Activated CD4-positive, alpha-beta memory T cell treated with anti-CD3 and anti-CD28 coated beads, Interleukin-2, amount 10 ng/mL, durations not matched to agents 7 days and 5 days (primary cell): ENCODE measurements at regions of chr12 and their contacts with region 1.

Region 1: GRCh38 chr12:49740930-49741881 is at the start of gene TMBIM6:
- DNase-seq: peak; percentile 99
- H3K4me3 Mint-ChIP-seq: peak within 1 kb of the TSS; percentile 96
- H3K27ac Mint-ChIP-seq: peak within 1 kb of the TSS; percentile 100
- H3K4me1 Mint-ChIP-seq: peaks cover 37% of the 10 kb centered on the region
- H3K27me3 Mint-ChIP-seq: peaks cover 1% of the 10 kb centered on the region
- total RNA-seq, gene TMBIM6: 600 to 613 TPM

Region 2: DNA sequence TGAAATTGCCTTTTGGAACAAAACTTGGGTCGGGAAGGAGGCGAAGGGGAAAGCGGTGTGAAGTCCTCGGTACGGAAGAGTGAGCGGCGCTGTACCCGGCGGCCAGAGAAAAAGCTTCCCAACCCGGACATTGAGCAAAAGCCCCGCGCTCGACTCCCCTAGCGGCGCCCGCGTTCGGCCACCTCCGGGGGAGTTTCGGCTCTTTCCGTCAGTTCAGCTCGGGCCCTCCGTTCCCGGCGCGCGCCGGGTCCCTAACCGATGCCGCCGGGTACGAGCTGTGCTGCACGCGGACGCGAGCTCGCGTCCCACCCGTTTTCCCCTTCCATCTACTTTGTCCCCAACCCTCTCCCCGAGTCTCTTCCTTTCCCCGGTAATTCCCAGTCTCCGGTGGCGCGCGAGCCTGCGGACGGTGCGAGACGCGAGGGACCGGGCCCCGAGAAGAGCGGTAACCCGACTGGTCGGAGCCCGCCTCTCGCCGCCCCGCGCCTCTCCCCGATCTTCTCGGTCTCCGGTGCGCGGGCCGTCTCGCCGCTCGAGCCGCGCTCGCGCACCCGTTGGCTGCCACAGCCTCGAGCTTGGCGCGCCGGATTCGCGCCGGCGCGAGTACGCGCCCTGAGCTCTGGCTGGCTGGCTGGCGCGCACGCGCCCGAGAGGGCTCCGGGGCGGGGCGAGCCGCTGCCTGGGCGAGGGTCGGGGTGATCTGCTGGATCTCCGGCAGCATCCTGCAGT is 374.4 kb before region 1 on chr12:
- CTCF ChIA-PET with region 1: interaction called, 8 read pairs
- POLR2A ChIA-PET with region 1: interaction called, 14 read pairs
- DNase-seq: peak; percentile 91
- H3K4me3 Mint-ChIP-seq: peak overlapping the region; percentile 96
- H3K27ac Mint-ChIP-seq: peak overlapping the region; percentile 93
- H3K4me1 Mint-ChIP-seq: peaks cover 35% of the 10 kb centered on the region
- H3K27me3 Mint-ChIP-seq: peaks cover 2% of the 10 kb centered on the region

Region 3: DNA sequence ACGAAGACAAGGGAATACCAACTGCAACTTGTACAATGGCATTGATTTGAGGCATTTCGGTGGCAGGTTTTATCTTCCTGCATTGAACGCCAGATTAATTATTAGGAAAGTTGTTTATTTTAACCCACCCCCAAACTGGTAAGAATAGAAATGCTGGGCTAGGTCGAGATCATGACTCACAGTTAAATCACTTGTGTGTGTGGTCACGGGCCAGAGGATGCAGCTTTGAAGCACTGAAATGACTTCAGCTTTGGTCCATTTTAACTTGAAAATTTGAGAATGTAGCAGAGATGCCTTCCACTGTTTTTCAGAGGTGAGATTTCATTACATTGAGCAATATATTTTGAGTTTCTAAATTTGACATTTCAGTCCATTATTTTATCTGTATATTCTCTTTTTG is 225.9 kb before region 1 on chr12:
- CTCF ChIA-PET with region 1: no interaction called
- POLR2A ChIA-PET with region 1: no interaction called
- DNase-seq: no peak
- H3K4me3 Mint-ChIP-seq: no peak overlapping the region
- H3K27ac Mint-ChIP-seq: no peak overlapping the region
- H3K4me1 Mint-ChIP-seq: peaks cover 1% of the 10 kb centered on the region
- H3K27me3 Mint-ChIP-seq: no peaks in the 10 kb centered on the region

Region 4: DNA sequence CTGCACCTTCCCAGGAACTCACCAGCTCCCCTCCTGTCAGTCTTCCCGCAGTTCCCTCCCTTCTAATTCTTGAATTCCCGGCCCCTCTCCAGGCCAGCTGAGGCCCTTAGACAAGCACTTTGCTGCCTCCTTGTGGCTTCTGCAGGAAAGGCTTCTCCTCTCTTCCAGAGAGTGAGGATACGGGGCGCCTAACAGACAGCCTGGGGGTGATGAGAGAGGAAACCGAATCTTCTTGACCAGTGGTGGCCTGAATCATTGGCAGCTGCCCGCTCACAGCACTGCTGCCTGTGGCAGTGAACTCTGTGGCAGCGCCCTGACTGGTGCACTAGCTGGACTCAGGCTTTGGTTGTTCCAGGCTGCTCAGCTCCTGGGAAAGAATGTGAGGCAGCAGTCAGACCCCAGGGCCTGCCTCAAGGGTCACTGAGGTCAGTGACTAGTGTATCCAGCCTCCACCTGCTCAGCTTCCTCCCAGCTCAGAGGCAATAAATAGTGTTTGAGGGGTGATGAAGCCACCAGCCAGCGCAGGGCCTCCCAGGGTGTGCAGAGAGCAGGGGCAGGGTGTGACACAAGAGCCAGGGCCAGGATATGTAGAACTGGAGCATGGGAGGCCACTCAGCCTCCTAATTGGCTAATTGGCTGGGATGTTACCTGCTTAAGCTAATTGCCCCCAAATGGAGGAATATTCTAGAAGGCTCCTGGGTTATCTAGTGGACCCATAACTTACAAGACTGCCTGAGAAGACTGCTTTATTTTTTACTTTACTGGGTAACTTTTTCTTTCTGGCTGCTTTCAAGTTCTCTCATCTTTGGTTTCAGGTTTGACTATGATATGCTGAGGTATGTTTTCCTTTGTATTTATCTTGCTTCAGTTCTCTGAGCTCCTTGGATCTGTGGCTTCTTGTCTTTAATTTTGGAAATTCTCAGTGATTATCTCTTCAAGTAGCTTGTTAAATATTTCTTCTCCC is 160.4 kb before region 1 on chr12:
- CTCF ChIA-PET with region 1: no interaction called
- POLR2A ChIA-PET with region 1: no interaction called
- DNase-seq: peak; percentile 65
- H3K4me3 Mint-ChIP-seq: no peak overlapping the region
- H3K27ac Mint-ChIP-seq: no peak overlapping the region
- H3K4me1 Mint-ChIP-seq: peaks cover 21% of the 10 kb centered on the region
- H3K27me3 Mint-ChIP-seq: no peaks in the 10 kb centered on the region

Region 5: DNA sequence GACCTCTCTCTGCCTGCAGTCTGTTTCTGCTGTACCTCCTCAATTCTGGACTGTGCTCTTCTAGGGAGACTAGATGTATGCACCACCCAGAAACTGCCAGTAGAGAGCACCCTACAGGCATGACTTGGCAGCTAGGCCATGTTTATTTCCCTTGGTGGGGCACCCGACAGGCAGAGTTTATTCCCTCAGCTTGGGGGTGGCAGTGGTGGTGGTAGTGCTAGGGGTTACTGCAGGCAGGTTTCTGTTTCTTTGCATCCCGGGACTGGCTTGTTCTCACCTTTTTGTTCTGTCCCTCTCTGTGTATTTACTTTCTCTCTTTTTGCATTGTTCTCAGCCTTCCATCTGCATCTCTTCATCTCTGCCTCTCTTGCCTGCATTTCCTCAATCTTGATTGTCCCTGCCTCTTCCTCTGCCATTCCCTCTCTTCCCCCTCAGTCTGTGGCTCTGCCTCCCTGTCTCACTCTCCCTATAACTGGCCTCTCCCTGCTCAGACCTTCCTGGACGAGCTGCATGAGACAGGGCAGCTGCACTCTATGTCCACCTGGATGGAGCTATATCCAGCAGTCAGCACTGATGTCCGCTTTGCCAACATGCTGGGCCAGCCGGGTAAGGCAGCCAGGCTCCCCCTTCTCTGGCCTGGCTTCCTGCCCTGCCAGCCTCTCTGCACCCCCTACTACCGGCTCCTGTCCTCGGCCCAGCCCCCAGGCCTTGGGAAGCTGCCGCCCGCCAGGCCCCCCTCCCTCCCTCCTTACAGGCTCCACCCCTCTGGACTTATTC is 104.0 kb before region 1 on chr12:
- CTCF ChIA-PET with region 1: interaction called, 11 read pairs
- POLR2A ChIA-PET with region 1: interaction called, 5 read pairs
- DNase-seq: peak; percentile 68
- H3K4me3 Mint-ChIP-seq: no peak overlapping the region
- H3K27ac Mint-ChIP-seq: no peak overlapping the region
- H3K4me1 Mint-ChIP-seq: peaks cover 16% of the 10 kb centered on the region
- H3K27me3 Mint-ChIP-seq: no peaks in the 10 kb centered on the region

Region 6: GRCh38 chr12:49673446-49674317 is 67.5 kb before region 1 on chr12:
- CTCF ChIA-PET with region 1: interaction called, 7 read pairs
- POLR2A ChIA-PET with region 1: interaction called, 23 read pairs
- DNase-seq: no peak
- H3K4me3 Mint-ChIP-seq: no peak overlapping the region
- H3K27ac Mint-ChIP-seq: peak overlapping the region; percentile 68
- H3K4me1 Mint-ChIP-seq: peaks cover 71% of the 10 kb centered on the region
- H3K27me3 Mint-ChIP-seq: no peaks in the 10 kb centered on the region

Region 7: GRCh38 chr12:49763006-49763591 is 21.9 kb after region 1 on chr12:
- CTCF ChIA-PET with region 1: interaction called, 66 read pairs
- POLR2A ChIA-PET with region 1: interaction called, 75 read pairs
- DNase-seq: peak; percentile 84
- H3K4me3 Mint-ChIP-seq: peak overlapping the region; percentile 3
- H3K27ac Mint-ChIP-seq: peak overlapping the region; percentile 92
- H3K4me1 Mint-ChIP-seq: peaks cover 51% of the 10 kb centered on the region
- H3K27me3 Mint-ChIP-seq: peaks cover 2% of the 10 kb centered on the region

Region 8: GRCh38 chr12:49842519-49843352 is 101.5 kb after region 1 on chr12 and contains the start of gene BCDIN3D:
- CTCF ChIA-PET with region 1: interaction called, 18 read pairs
- POLR2A ChIA-PET with region 1: interaction called, 13 read pairs
- DNase-seq: peak; percentile 93
- H3K4me3 Mint-ChIP-seq: peak within 1 kb of the TSS; percentile 81
- H3K27ac Mint-ChIP-seq: peak within 1 kb of the TSS; percentile 79
- H3K4me1 Mint-ChIP-seq: peaks cover 42% of the 10 kb centered on the region
- H3K27me3 Mint-ChIP-seq: no peaks in the 10 kb centered on the region
- total RNA-seq, gene BCDIN3D: 8.9 to 9.9 TPM